MCF 10A (cell line): ENCODE measurements at regions of chr1 and their contacts with region 1.

Region 1: GRCh38 chr1:9128520-9129265 is at the start of gene GPR157:
- DNase-seq: peak; percentile 87
- H3K4me3 Mint-ChIP-seq: peak within 1 kb of the TSS; percentile 89
- H3K27ac Mint-ChIP-seq: peak within 1 kb of the TSS; percentile 88
- H3K4me1 Mint-ChIP-seq: peaks cover 10% of the 10 kb centered on the region
- H3K27me3 Mint-ChIP-seq: no peaks in the 10 kb centered on the region
- CTCF ChIP-seq: no peak
- total RNA-seq, gene GPR157: 8.1 and 12.7 TPM in 2 replicates

Region 2: DNA sequence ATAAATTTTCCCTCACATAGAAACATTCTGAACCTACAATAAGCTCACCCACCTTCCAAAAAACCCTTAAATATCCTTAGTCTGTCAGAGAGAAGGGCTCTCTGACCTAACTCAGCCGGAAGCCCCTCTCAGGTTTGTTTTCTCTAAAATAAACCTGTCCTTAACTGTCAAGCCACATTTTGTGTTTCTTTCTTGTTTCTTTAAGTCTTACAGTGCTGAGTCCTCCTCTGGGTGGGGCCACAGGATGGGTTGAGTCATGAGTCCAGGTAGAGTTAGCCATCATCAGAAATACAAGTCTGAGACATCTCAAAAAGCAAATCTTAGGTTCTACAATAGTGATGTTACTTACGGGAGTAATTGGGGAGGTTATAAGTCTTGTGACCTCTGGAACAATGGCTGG is 32.9 kb before region 1 on chr1:
- CTCF ChIA-PET with region 1: no interaction called
- POLR2A ChIA-PET with region 1: no interaction called
- intact Hi-C with region 1: no loop called
- DNase-seq: no peak
- H3K4me3 Mint-ChIP-seq: no peak overlapping the region
- H3K27ac Mint-ChIP-seq: no peak overlapping the region
- H3K4me1 Mint-ChIP-seq: no peaks in the 10 kb centered on the region
- H3K27me3 Mint-ChIP-seq: no peaks in the 10 kb centered on the region
- CTCF ChIP-seq: no peak

Region 3: DNA sequence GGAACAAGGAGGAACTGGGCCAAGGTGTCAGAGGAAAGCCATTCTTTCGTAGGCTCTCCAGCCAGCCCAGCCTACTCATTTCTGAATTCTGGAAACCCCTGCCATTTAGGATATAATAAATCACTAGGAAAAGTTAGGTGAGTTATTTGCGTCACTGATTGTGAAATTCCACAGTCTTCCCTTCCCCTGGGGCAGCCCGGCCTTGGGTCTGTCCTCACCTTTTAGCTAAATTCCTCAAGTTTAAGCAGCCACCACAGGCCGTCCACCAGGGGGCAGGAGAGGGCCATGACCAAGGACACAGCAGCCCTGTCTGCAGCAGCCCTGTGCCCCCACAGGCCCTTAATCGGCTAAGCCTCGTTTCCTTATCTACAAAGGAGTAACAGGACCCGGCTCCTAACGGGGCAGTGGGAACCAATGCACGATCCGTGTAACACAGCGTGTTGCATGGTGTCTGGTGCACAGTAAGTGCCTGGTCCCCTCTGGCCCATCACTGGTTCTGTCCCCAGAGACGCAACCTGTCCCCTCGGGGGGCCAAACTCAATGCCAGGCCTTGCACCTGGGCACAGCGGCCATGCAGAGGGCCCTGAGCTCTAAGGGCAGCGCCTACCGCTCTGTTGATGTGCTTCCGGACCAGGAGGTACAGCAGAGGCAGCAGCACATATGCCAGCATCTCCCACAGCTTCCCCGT is 17.9 kb before region 1 on chr1:
- CTCF ChIA-PET with region 1: interaction called, 8 read pairs
- POLR2A ChIA-PET with region 1: interaction called, 29 read pairs
- intact Hi-C with region 1: loop called (anchors 2 kb)
- DNase-seq: peak; percentile 99
- H3K4me3 Mint-ChIP-seq: no peak overlapping the region
- H3K27ac Mint-ChIP-seq: no peak overlapping the region
- H3K4me1 Mint-ChIP-seq: peaks cover 41% of the 10 kb centered on the region
- H3K27me3 Mint-ChIP-seq: no peaks in the 10 kb centered on the region
- CTCF ChIP-seq: peak; percentile 92

Region 4: DNA sequence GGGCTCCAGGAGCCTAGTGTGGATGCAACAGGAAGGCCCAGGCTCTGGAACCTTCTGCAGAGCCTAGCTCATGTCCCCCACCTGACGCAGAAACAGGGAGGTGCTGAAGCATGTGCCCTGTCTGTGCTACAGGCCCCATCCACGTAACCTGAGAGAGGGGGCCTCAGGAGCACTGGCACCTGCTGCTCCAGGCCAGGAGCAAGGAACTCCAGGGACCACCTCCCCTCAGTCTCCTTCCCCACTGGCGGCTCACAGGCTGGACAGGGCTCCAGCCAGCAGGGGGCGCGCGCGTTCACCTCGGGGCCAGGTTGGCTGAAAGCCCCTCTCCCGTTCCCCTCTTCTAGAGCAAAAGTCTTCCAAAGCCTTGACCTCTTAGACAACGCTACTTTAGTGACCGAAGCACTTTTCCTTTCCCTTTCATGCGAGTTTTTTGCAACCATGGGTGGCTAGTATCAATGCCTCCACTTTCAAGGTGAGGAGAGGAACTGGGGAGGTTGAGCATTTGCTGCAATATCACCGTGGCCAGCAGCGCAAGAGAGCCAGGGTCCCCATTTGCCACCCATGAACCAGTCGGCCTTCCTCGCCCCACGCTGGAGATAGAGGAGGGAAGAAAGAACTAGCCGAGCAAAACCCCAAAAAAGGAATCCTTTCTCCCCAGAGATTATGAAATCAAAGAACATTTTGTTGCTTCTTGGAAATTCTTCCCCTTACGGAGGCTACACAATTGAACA is 52.6 kb after region 1 on chr1:
- CTCF ChIA-PET with region 1: interaction called, 3 read pairs
- POLR2A ChIA-PET with region 1: interaction called, 3 read pairs
- intact Hi-C with region 1: loop called (anchors 5 kb)
- DNase-seq: peak; percentile 75
- H3K4me3 Mint-ChIP-seq: peak overlapping the region; percentile 91
- H3K27ac Mint-ChIP-seq: peak overlapping the region; percentile 93
- H3K4me1 Mint-ChIP-seq: peaks cover 20% of the 10 kb centered on the region
- H3K27me3 Mint-ChIP-seq: no peaks in the 10 kb centered on the region
- CTCF ChIP-seq: peak; percentile 95

Region 5: GRCh38 chr1:9196129-9197040 is 67.7 kb after region 1 on chr1:
- CTCF ChIA-PET with region 1: interaction called, 8 read pairs
- POLR2A ChIA-PET with region 1: interaction called, 3 read pairs
- intact Hi-C with region 1: loop called (anchors 5 kb)
- DNase-seq: peak; percentile 76
- H3K4me3 Mint-ChIP-seq: no peak overlapping the region
- H3K27ac Mint-ChIP-seq: peak overlapping the region; percentile 54
- H3K4me1 Mint-ChIP-seq: peaks cover 46% of the 10 kb centered on the region
- H3K27me3 Mint-ChIP-seq: no peaks in the 10 kb centered on the region
- CTCF ChIP-seq: peak; percentile 79

Region 6: DNA sequence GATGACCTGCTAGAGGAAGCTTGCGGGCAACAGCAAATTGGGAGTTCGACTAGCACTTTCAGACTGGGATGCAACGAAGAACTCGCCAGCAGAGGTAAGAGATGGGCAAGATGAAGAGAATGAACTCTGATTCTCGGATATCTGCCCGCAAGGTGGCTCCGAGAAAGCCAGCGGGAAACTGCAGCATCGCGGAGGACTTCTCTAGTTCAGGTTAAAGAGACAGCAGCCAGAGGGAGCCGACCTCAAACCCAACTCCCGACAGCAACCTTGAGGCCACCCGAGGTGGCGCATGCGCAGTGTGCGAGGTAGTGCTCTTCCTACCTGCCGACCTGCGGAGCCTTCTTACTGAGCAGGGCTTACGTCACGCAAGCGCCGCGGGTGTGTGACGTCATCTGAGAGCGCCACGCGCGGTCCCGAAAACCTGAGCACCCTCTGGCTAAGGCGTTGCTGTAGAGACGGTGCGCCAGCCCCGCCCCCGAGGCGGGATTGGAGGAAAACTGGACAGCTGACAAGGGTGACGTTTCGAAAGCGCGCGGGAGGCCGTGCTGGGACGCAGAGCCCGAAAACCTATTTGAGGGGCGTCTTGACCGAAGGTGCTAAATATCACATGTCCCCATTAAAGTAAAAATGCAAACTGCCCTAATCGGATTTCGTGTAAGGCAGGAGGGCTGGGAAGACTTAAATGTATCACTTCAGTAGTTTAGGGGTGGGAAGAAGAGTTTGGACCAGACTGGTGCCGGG is 300.1 kb after region 1 on chr1:
- CTCF ChIA-PET with region 1: no interaction called
- POLR2A ChIA-PET with region 1: no interaction called
- intact Hi-C with region 1: no loop called
- DNase-seq: peak; percentile 97
- H3K4me3 Mint-ChIP-seq: peak overlapping the region; percentile 94
- H3K27ac Mint-ChIP-seq: peak overlapping the region; percentile 98
- H3K4me1 Mint-ChIP-seq: peaks cover 17% of the 10 kb centered on the region
- H3K27me3 Mint-ChIP-seq: no peaks in the 10 kb centered on the region
- CTCF ChIP-seq: no peak